ENCODE measurements at regions of chr5 and their contacts with region 1.

Region 1: DNA sequence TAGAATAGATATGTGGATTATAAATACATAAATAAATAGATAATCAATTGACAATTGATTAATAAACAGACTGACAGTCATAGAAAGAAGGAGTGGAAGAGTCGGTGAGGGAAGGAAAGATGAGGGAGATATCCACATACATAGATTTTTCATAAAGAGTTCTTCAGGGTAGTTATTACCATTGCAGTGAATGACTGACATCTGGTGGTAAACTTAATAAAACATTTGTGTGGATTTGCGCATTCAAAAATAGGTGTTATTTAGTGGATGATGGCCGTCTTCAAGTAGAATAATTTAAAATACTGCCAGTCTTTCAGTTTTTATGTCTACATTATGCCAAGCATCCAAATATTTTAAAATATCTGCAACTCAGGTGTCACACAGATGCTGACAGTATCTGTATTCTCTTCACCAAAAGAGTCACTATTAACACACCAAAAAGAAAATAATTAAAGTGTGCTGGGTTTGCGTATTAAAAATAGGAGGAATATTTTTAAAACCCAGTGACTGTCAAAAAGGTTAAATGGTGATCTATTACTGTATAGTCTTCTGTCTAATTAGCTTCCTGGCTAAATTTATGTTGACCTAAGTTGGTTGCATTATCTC is 78.8 kb downstream of the GIN1 start:
- DNase-seq: peak in 1 of 2 donors; percentile 60
- ATAC-seq: peak; percentile 39 to 63 (median 52)
- H3K4me3 ChIP-seq: no peak overlapping the region
- H3K4me3 Mint-ChIP-seq: no peak overlapping the region
- H3K27ac ChIP-seq: no peak overlapping the region
- H3K27ac Mint-ChIP-seq: no peak overlapping the region
- H3K4me1 ChIP-seq: no peaks in the 10 kb centered on the region
- H3K4me1 Mint-ChIP-seq: no peaks in the 10 kb centered on the region
- H3K27me3 ChIP-seq: no peaks in the 10 kb centered on the region
- H3K27me3 Mint-ChIP-seq: peaks cover 0 to 22% of the 10 kb centered on the region in 2 donors
- CTCF ChIP-seq: peak; percentile 75

Region 2: GRCh38 chr5:102536323-102536928 is 504.7 kb before region 1 on chr5:
- intact Hi-C with region 1: loop called (anchors 5 kb)
- DNase-seq: peak in 1 of 2 donors; percentile 18
- ATAC-seq: no peak
- H3K4me3 ChIP-seq: no peak overlapping the region
- H3K4me3 Mint-ChIP-seq: no peak overlapping the region
- H3K27ac ChIP-seq: no peak overlapping the region
- H3K27ac Mint-ChIP-seq: no peak overlapping the region
- H3K4me1 ChIP-seq: no peaks in the 10 kb centered on the region
- H3K4me1 Mint-ChIP-seq: no peaks in the 10 kb centered on the region
- H3K27me3 ChIP-seq: no peaks in the 10 kb centered on the region
- H3K27me3 Mint-ChIP-seq: no peaks in the 10 kb centered on the region
- CTCF ChIP-seq: peak; percentile 29

Region 3: GRCh38 chr5:102583276-102584124 is 457.7 kb before region 1 on chr5:
- intact Hi-C with region 1: loop called (anchors 1 kb)
- DNase-seq: peak in 1 of 2 donors; percentile 20
- ATAC-seq: no peak
- H3K4me3 ChIP-seq: no peak overlapping the region
- H3K4me3 Mint-ChIP-seq: no peak overlapping the region
- H3K27ac ChIP-seq: no peak overlapping the region
- H3K27ac Mint-ChIP-seq: no peak overlapping the region
- H3K4me1 ChIP-seq: no peaks in the 10 kb centered on the region
- H3K4me1 Mint-ChIP-seq: peaks cover 0 to 4% of the 10 kb centered on the region in 2 donors
- H3K27me3 ChIP-seq: no peaks in the 10 kb centered on the region
- H3K27me3 Mint-ChIP-seq: peaks cover 0 to 9% of the 10 kb centered on the region in 2 donors
- CTCF ChIP-seq: peak; percentile 42

Region 4: DNA sequence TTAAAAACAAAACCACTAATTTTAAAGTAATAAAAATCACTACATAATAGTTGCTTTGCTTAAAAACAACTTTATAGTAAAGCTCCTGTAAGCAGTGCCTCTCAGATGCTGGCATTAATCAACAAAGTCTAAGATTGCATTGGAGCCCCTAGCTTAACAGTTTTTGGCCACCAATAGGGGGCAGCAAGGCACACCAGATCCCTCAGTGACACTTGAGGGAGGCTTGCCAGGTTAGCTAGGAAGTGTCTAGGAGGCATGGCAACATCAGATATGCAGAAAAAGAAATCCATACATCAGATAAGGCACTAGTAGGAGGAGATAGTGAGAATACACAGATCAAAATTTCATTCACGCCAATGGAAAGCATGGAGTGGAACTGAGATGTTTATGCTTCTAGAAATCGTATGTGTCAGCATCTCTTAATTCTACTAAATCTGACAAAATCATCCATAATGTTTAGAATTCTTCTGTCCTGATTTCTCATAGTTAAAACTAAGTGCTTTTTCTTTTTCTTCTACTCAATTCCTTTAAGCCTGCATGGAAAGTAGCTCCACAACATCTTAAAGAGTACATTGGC is 359.7 kb before region 1 on chr5:
- intact Hi-C with region 1: loop called (anchors 1 kb)
- DNase-seq: peak; percentile 21 to 75
- ATAC-seq: peak; percentile 56 to 76 (median 69)
- H3K4me3 ChIP-seq: no peak overlapping the region
- H3K4me3 Mint-ChIP-seq: no peak overlapping the region
- H3K27ac ChIP-seq: no peak overlapping the region
- H3K27ac Mint-ChIP-seq: no peak overlapping the region
- H3K4me1 ChIP-seq: no peaks in the 10 kb centered on the region
- H3K4me1 Mint-ChIP-seq: no peaks in the 10 kb centered on the region
- H3K27me3 ChIP-seq: no peaks in the 10 kb centered on the region
- H3K27me3 Mint-ChIP-seq: no peaks in the 10 kb centered on the region
- CTCF ChIP-seq: peak; percentile 85

Region 5: DNA sequence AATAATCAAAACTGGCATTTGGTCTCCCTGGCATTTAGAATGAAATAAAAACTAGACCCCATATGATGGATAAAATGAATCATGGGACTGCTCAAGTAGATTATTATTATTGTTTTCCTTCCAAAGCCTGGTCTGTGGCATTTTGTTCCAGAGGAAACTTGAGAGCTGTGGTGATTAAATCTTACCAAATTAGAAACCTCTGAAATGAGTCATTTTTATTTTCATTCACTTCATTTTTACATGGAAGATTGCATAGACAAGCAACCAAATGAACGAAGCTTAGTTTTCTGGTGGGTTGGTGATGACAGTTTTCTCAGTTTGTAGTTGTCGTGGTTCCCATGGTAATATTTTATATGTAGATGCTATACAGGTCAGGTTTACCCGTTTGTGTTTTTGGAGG is 262.7 kb before region 1 on chr5:
- intact Hi-C with region 1: loop called (anchors 1 kb)
- DNase-seq: no peak
- ATAC-seq: no peak
- H3K4me3 ChIP-seq: no peak overlapping the region
- H3K4me3 Mint-ChIP-seq: no peak overlapping the region
- H3K27ac ChIP-seq: no peak overlapping the region
- H3K27ac Mint-ChIP-seq: peak overlapping the region in 1 of 2 donors; percentile 23
- H3K4me1 ChIP-seq: peaks cover under 1% of the 10 kb centered on the region
- H3K4me1 Mint-ChIP-seq: peaks cover 36 to 56% of the 10 kb centered on the region in 2 donors
- H3K27me3 ChIP-seq: no peaks in the 10 kb centered on the region
- H3K27me3 Mint-ChIP-seq: no peaks in the 10 kb centered on the region
- CTCF ChIP-seq: no peak

Region 6: GRCh38 chr5:102856389-102856777 is 184.8 kb before region 1 on chr5:
- intact Hi-C with region 1: loop called (anchors 1 kb)
- DNase-seq: no peak
- ATAC-seq: peak in 1 of 3 donors; percentile 6
- H3K4me3 ChIP-seq: no peak overlapping the region
- H3K4me3 Mint-ChIP-seq: peak overlapping the region; percentile 89
- H3K27ac ChIP-seq: peak overlapping the region; percentile 39
- H3K27ac Mint-ChIP-seq: peak overlapping the region; percentile 91 to 92
- H3K4me1 ChIP-seq: peaks cover 15% of the 10 kb centered on the region
- H3K4me1 Mint-ChIP-seq: peaks cover 63 to 64% of the 10 kb centered on the region in 2 donors
- H3K27me3 ChIP-seq: no peaks in the 10 kb centered on the region
- H3K27me3 Mint-ChIP-seq: no peaks in the 10 kb centered on the region
- CTCF ChIP-seq: no peak

Region 7: GRCh38 chr5:102998224-102998623 is 43.0 kb before region 1 on chr5:
- intact Hi-C with region 1: no loop called
- DNase-seq: no peak
- ATAC-seq: no peak
- H3K4me3 ChIP-seq: no peak overlapping the region
- H3K4me3 Mint-ChIP-seq: no peak overlapping the region
- H3K27ac ChIP-seq: no peak overlapping the region
- H3K27ac Mint-ChIP-seq: no peak overlapping the region
- H3K4me1 ChIP-seq: no peaks in the 10 kb centered on the region
- H3K4me1 Mint-ChIP-seq: no peaks in the 10 kb centered on the region
- H3K27me3 ChIP-seq: no peaks in the 10 kb centered on the region
- H3K27me3 Mint-ChIP-seq: no peaks in the 10 kb centered on the region
- CTCF ChIP-seq: no peak

Region 8: DNA sequence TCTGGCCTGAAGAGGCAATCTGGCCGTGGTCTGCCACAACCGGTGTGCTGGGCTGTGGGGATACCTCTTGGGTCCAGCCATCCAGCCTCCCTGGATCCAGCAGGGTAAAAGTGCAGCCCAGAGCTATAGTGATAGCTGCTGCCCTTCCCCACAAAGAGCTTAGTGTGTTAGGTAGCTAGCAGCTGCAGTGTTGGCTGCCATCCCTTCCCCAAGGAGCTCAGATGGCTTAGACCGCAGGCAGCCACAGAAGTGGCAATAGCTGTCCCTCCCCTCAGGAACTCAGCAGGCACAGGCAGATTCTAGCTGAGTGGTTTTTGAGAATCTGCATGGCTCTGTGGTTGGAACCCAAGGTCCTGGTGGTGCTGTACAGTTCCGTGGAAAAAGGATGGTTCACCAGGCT is 38.6 kb after region 1 on chr5:
- intact Hi-C with region 1: no loop called
- DNase-seq: no peak
- ATAC-seq: no peak
- H3K4me3 ChIP-seq: no peak overlapping the region
- H3K4me3 Mint-ChIP-seq: no peak overlapping the region
- H3K27ac ChIP-seq: no peak overlapping the region
- H3K27ac Mint-ChIP-seq: no peak overlapping the region
- H3K4me1 ChIP-seq: no peaks in the 10 kb centered on the region
- H3K4me1 Mint-ChIP-seq: no peaks in the 10 kb centered on the region
- H3K27me3 ChIP-seq: no peaks in the 10 kb centered on the region
- H3K27me3 Mint-ChIP-seq: no peaks in the 10 kb centered on the region
- CTCF ChIP-seq: no peak

Region 9: DNA sequence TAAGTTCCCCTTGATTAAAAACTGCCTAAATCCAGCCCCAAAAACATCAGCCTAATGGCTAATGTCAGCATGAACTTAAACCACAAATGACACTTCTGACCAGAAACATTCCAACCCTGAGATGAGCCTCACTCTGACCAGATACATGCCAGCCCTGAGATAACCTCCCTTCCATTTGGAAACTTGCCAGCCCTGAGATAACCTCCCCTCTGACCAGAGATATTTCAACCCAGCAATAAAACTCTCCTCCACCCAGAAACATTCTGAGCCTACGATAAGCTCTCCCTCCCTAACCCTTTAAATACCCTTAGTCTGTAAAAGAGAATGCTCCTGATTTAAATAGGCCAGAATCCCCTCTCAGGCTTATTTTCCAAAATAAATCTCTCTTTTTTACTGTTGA is 1557.1 kb after region 1 on chr5:
- intact Hi-C with region 1: no loop called
- DNase-seq: no peak
- ATAC-seq: no peak
- H3K4me3 ChIP-seq: no peak overlapping the region
- H3K4me3 Mint-ChIP-seq: no peak overlapping the region
- H3K27ac ChIP-seq: no peak overlapping the region
- H3K27ac Mint-ChIP-seq: no peak overlapping the region
- H3K4me1 ChIP-seq: no peaks in the 10 kb centered on the region
- H3K4me1 Mint-ChIP-seq: no peaks in the 10 kb centered on the region
- H3K27me3 ChIP-seq: no peaks in the 10 kb centered on the region
- H3K27me3 Mint-ChIP-seq: no peaks in the 10 kb centered on the region
- CTCF ChIP-seq: no peak